Calu3 (cell line): ENCODE measurements at regions of chr3 and their contacts with region 1.

Region 1: DNA sequence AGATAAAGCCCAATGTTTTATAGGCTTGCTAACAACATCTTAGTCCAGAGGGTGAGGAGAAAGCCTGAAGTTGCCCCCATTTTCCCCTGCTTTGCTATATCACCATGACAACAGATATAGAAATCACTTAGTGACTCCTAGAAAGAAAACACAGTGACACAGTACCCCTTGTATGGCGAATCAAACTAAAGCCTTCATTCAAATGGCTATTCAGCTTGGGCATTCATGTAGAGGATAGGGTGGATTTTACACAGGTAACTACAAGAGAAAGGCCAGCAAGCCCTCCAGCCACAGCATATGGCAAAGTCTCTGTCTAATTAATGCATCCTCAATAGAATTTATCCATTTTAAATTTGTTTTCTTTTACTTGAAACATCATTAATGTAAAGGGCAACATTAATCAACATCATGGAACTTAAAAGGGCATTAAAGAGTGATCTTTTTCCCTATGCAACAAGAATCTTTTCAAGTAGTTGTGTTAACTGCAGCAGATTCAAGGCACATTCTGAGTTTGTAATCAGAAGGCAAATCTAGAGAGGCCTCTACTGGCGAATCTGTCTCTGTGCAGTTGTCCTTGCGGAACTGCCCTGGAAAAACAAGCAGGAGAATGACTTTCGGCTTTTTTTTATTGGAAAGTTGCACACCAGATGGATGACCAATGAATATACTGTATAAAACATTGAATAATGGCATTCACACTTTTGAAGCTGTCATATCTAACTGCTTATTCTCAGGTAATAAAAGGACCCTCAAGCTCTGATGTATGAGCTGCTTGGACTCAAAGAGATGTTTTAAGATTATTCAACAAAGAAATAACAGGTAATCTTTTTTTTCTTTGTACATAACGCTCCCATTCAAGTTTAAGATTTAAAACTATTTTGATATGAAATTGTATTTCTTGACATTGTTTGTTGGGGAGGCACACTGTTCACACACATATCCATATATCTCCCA is 621.7 kb upstream of the AGTR1 start:
- DNase-seq: peak; percentile 44
- H3K4me3 Mint-ChIP-seq: no peak overlapping the region
- H3K27ac Mint-ChIP-seq: no peak overlapping the region
- H3K4me1 Mint-ChIP-seq: no peaks in the 10 kb centered on the region
- H3K27me3 Mint-ChIP-seq: no peaks in the 10 kb centered on the region
- CTCF ChIP-seq: peak; percentile 74

Region 2: GRCh38 chr3:146817704-146818103 is 1258.3 kb before region 1 on chr3:
- CTCF ChIA-PET with region 1: no interaction called
- intact Hi-C with region 1: loop called (anchors 2 kb)
- DNase-seq: no peak
- H3K4me3 Mint-ChIP-seq: no peak overlapping the region
- H3K27ac Mint-ChIP-seq: no peak overlapping the region
- H3K4me1 Mint-ChIP-seq: no peaks in the 10 kb centered on the region
- H3K27me3 Mint-ChIP-seq: no peaks in the 10 kb centered on the region
- CTCF ChIP-seq: peak; percentile 32

Region 3: DNA sequence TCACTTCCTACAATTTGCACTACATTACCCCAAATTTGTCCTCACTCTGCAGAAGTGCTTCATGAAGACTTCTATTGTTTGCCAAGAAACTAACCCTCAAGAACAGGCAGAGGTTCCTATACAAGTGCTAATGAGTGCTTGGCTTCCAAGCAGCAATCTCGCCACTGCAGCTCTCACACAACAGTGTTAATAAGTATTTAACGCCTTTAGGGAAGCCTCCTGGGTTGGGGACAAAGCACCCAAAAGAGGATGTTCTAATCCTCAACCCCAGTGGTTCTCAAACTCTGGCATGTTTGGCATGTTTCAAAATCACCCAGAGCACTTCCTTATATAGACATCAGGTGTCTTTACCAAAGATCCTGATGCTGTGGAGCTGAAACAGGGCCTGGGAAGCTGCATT is 734.3 kb before region 1 on chr3:
- CTCF ChIA-PET with region 1: no interaction called
- intact Hi-C with region 1: loop called (anchors 10 kb)
- DNase-seq: no peak
- H3K4me3 Mint-ChIP-seq: no peak overlapping the region
- H3K27ac Mint-ChIP-seq: no peak overlapping the region
- H3K4me1 Mint-ChIP-seq: peaks cover 8% of the 10 kb centered on the region
- H3K27me3 Mint-ChIP-seq: no peaks in the 10 kb centered on the region
- CTCF ChIP-seq: no peak

Region 4: GRCh38 chr3:147616998-147617619 is 458.9 kb before region 1 on chr3:
- CTCF ChIA-PET with region 1: no interaction called
- intact Hi-C with region 1: loop called (anchors 2 kb)
- DNase-seq: no peak
- H3K4me3 Mint-ChIP-seq: no peak overlapping the region
- H3K27ac Mint-ChIP-seq: no peak overlapping the region
- H3K4me1 Mint-ChIP-seq: no peaks in the 10 kb centered on the region
- H3K27me3 Mint-ChIP-seq: no peaks in the 10 kb centered on the region
- CTCF ChIP-seq: peak; percentile 51

Region 5: DNA sequence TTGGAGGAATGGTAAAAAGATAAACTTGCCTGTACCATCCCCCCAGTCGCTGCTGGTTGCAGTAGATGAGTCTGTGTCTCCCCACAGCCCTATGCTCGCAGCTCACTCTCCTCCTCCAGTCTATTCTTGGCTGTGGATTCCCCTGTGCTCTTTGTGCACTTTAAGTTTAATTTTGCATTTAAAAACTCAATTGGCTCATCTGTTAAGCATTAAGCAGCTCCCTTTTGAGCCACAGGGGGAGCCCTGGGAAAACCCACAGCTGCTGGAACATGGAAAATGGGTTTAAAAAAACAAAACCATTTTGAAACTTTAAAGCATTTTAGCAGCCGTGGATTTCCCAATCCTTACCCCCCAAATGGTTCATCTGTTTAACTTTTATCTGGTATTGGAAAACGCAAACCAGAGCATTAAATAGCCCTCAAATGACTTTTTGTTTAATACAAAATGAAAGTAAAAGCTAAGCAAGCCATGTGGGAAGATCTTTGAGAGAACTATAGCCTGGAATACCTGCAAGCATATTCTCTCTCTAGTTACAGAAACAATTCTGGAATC is 130.0 kb before region 1 on chr3:
- CTCF ChIA-PET with region 1: no interaction called
- intact Hi-C with region 1: loop called (anchors 5 kb)
- DNase-seq: peak; percentile 75
- H3K4me3 Mint-ChIP-seq: peak overlapping the region; percentile 9
- H3K27ac Mint-ChIP-seq: peak overlapping the region; percentile 36
- H3K4me1 Mint-ChIP-seq: peaks cover 35% of the 10 kb centered on the region
- H3K27me3 Mint-ChIP-seq: no peaks in the 10 kb centered on the region
- CTCF ChIP-seq: peak; percentile 80